Activated CD4-positive, alpha-beta T cell treated with anti-CD3 and anti-CD28 coated beads for 36 hours (primary cell): ENCODE measurements at regions of chr2 and their contacts with region 1.

Region 1: GRCh38 chr2:84781942-84782716 is 98.8 kb downstream of the TRABD2A start:
- DNase-seq: peak; percentile 79
- ATAC-seq: peak; percentile 94
- H3K4me3 Mint-ChIP-seq: no peak overlapping the region
- H3K27ac Mint-ChIP-seq: peak overlapping the region; percentile 81
- H3K4me1 Mint-ChIP-seq: peaks cover 73% of the 10 kb centered on the region
- H3K27me3 Mint-ChIP-seq: no peaks in the 10 kb centered on the region

Region 2: DNA sequence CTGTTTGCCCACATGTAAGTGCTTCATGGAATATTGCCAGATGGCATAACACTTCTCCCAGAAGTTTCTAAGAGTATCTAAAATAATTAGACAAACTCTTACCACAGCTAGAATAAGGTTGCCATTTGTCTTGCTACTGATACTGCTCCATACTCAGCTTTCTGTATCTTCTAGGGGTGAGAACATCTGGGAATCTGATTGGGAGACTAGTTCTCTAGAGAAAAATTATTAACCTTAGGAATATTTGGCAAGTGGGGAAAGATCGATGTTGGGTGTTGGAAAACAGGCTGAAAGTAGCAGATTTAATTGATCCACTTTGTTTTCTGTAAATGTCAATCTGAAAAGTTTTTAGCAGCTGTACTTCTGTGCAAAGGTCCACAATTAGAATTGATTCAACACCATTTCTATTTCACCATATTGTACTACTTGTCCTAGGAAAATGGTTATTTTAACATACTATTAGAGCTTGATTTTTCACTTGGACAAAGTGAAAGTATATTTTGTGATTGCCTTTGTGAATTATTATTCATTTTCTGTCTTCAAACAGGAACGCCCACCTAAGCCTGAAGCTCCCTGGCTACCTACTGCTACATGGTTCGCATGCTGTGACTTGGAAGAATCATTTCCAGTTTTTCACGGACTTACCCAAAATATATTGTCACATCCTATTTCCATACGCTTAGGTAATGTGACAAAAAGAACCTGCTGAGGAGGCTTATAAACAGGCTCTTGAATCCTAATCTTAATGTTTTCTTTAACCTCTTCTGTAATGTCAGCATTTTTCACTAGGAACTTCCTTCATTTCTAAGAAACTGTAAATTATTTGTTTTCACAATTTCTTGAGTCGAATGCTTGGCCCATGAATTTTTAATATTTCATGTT is 49.0 kb before region 1 on chr2:
- CTCF ChIA-PET with region 1: no interaction called
- POLR2A ChIA-PET with region 1: no interaction called
- intact Hi-C with region 1: loop called in 1 of 2 experiments (anchors 5 kb)
- DNase-seq: no peak
- ATAC-seq: no peak
- H3K4me3 Mint-ChIP-seq: no peak overlapping the region
- H3K27ac Mint-ChIP-seq: no peak overlapping the region
- H3K4me1 Mint-ChIP-seq: peaks cover 14% of the 10 kb centered on the region
- H3K27me3 Mint-ChIP-seq: no peaks in the 10 kb centered on the region

Region 3: DNA sequence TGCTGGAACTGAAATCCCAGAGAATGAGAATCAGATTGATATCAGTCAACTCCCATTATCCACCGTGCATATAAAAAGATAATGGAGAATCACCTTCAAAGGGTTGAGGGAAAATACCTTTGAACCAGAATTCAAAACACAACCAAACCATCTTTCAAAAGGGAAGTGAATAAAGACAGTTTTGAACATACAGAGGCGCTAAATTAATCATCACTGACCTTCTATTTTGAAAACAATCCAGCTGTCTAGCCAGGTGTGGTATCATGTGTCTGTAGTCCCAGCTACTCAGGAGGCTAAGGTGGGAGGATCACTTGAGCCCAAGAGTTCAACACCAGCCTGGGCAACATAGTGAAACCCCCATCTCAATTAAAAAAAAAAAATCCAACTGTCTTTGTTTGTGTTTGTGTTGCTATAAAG is 35.1 kb after region 1 on chr2:
- CTCF ChIA-PET with region 1: interaction called, 3 read pairs
- POLR2A ChIA-PET with region 1: no interaction called
- intact Hi-C with region 1: loop called (anchors 1 to 5 kb)
- DNase-seq: peak; percentile 36
- ATAC-seq: peak; percentile 85
- H3K4me3 Mint-ChIP-seq: peak overlapping the region; percentile 20
- H3K27ac Mint-ChIP-seq: no peak overlapping the region
- H3K4me1 Mint-ChIP-seq: peaks cover 52% of the 10 kb centered on the region
- H3K27me3 Mint-ChIP-seq: no peaks in the 10 kb centered on the region

Region 4: DNA sequence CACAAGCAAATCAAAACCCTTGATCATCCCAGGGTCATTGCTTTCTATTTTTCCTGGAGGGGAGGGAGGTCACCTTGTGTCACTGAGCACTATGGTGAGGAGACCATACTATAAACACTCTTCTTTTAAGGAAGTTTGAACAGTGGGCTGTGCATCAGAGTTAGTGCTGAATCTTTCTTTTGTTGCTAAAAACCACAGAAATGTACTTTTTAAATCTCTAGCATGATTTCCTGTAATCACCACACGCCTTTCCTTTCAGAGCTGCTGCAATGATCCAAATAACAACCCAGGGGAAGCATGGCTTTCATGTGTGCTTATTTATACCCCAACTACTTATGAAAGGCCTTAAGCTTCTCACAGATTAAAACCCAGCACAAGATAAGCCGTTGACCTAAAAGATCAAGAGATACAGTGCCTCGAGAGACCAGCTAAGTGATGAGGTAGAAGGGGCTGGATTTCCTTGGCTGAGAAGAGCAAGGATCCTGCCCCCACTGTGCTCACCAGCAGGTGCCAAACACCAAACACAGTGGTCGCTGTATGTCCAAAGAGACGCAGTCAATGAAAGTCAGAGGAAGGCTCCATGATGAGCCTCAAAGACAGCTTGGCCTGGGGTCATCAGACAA is 64.0 kb after region 1 on chr2:
- CTCF ChIA-PET with region 1: interaction called, 3 read pairs
- POLR2A ChIA-PET with region 1: no interaction called
- intact Hi-C with region 1: loop called in 1 of 2 experiments (anchors 5 kb)
- DNase-seq: peak; percentile 47
- ATAC-seq: peak; percentile 52
- H3K4me3 Mint-ChIP-seq: peak overlapping the region; percentile 12
- H3K27ac Mint-ChIP-seq: peak overlapping the region; percentile 94
- H3K4me1 Mint-ChIP-seq: peaks cover 93% of the 10 kb centered on the region
- H3K27me3 Mint-ChIP-seq: no peaks in the 10 kb centered on the region

Region 5: DNA sequence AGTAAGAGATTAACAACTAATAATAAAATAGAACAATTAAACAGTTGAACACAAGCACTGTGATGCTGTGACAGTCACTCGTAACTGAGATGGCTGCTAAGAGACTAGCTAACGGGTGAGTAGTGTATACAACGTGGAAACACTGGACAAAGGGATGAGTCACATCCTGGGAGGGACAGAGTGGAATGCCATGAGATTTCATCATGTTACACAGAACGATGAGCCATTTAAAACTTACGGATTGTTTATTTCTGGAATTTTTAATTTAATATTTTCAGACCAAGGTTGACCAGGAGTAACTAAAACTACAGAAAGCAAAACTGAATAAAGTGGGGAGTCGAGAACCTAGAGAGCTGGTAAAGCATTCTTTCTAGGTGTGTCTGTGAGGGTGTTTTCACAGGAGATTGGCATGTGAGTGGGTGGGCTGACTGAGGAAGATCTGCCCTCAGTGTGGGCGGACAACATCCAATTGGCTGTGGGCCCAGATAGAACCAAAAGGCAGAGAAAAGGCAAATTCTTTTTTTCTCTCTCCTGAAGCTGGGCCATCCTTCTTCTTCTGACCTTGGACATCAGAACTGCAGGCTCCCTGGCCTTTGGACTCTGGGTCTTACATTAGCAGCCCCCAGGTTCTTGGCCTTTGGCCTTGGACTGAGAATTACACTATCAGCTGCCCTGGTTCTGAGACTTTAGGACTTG is 137.9 kb after region 1 on chr2:
- CTCF ChIA-PET with region 1: interaction called, 8 read pairs
- POLR2A ChIA-PET with region 1: no interaction called
- intact Hi-C with region 1: loop called in 1 of 2 experiments (anchors 5 kb)
- DNase-seq: peak; percentile 81
- ATAC-seq: peak; percentile 81
- H3K4me3 Mint-ChIP-seq: peak overlapping the region; percentile 36
- H3K27ac Mint-ChIP-seq: peak overlapping the region; percentile 83
- H3K4me1 Mint-ChIP-seq: peaks cover 41% of the 10 kb centered on the region
- H3K27me3 Mint-ChIP-seq: no peaks in the 10 kb centered on the region